ENCODE measurements at regions of chr7 and their contacts with region 1.

Region 1: GRCh38 chr7:104848138-104848990 is 165.6 kb upstream of the KMT2E start:
- DNase-seq: peak; percentile 18
- ATAC-seq: peak; percentile 90
- H3K4me3 ChIP-seq: no peak overlapping the region
- H3K27ac ChIP-seq: no peak overlapping the region
- H3K4me1 ChIP-seq: no peaks in the 10 kb centered on the region
- H3K27me3 ChIP-seq: peaks cover 50% of the 10 kb centered on the region
- CTCF ChIP-seq: peak; percentile 62 to 94 (median 88)
- POLR2A ChIP-seq: no peak
- RAD21 ChIP-seq: peak; percentile 84

Region 2: DNA sequence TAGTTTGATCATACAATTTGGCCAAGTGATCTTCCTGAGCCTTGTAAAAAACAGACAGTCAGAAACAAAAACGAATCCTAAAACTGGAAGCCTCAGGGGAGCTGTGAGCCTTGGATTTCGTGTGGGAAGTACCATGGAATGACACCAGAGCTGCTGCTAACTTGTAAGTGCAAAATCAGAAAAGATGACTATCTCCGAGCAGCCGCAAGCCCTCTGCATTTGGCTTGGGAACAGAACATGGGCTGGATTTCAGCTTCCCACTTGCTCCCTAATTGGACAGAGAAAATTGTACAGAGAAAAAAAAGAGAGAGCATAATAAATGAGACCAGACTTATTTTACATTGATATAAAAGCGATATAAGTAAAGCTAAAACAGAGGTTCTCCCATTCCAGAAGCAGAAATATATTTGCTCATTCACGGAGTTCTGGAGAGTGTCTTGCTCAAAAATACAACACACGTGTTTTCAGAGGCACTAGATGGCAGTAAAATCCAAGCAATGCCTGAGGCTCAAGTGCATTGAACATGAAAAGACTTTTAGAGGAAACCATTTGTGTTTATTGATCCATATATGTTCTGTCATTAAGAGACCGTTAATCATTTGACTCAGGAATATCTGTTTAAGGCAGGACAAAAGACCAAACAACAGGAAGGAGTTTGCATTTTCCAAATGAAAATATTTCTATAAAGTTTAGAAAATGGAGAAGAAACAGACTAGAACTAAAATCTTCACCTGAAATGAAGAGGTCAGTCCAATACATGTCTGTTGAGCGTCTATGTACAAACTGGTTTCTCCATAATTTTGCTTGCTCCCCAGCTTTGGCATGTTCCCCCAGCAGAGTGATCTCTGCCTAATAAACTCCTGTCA is 1324.1 kb before region 1 on chr7:
- CTCF ChIA-PET with region 1: no interaction called
- POLR2A ChIA-PET with region 1: no interaction called
- RAD21 ChIA-PET with region 1: no interaction called
- intact Hi-C with region 1: loop called (anchors 10 kb)
- DNase-seq: peak; percentile 12
- ATAC-seq: peak; percentile 62
- H3K4me3 ChIP-seq: no peak overlapping the region
- H3K27ac ChIP-seq: no peak overlapping the region
- H3K4me1 ChIP-seq: no peaks in the 10 kb centered on the region
- H3K27me3 ChIP-seq: peaks cover 57% of the 10 kb centered on the region
- CTCF ChIP-seq: peak; percentile 19 to 44 (median 25); a peak in 3 of 6 replicates
- POLR2A ChIP-seq: no peak
- RAD21 ChIP-seq: peak; percentile 64

Region 3: DNA sequence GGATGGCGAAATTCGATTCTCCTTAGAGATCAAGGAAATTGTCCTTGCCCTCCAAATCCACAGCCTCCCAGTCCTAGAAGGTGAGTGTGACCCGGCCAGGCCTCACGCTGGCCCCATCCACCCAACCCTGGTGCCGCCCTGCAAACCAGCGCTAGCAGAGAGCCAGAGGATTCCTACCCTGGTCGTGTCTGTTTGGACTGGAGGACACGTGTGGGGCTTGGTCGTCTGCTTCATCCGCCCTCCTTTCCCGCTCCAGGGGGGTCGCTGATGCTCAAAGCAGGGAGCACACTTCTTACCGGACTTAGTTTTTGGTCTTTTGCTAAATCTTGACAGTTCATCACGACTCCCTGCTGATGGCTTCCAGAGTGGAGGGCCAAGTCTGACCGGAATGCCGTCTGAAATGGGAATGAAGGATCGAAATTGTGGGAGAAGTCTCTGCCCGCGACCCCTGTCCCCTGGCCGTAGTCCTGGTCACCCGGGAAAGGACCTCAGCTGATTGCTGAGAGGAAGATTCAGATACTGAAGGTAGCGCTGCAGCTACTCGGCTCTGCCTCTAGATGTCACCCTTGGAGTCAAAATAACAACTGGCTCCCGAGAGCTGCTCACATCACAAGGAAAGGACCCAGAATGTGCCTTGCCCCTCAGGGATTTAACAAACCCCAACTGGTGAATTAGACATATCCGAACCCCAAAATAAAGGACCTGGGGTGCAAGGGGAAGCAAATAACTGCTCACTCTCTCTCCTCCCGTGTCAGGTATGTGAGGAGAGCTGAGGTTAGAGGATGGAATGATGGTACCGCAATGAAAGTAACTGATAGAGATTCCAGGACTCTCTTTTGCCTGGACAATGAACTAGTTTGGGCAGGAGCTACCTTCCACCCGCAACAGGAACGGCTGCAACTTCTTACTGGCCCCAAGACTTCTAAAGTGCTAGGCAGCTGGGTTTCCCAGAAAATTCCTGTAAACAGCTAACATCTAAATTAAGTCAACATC is 617.0 kb before region 1 on chr7:
- CTCF ChIA-PET with region 1: interaction called, 7 read pairs
- POLR2A ChIA-PET with region 1: no interaction called
- RAD21 ChIA-PET with region 1: no interaction called
- intact Hi-C with region 1: loop called (anchors 2 kb)
- DNase-seq: peak; percentile 36
- ATAC-seq: peak; percentile 98
- H3K4me3 ChIP-seq: no peak overlapping the region
- H3K27ac ChIP-seq: no peak overlapping the region
- H3K4me1 ChIP-seq: no peaks in the 10 kb centered on the region
- H3K27me3 ChIP-seq: peaks cover 12% of the 10 kb centered on the region; the same call in 1 of the 2 replicates
- CTCF ChIP-seq: peak; percentile 54 to 87 (median 85)
- POLR2A ChIP-seq: no peak
- RAD21 ChIP-seq: peak; percentile 79

Region 4: DNA sequence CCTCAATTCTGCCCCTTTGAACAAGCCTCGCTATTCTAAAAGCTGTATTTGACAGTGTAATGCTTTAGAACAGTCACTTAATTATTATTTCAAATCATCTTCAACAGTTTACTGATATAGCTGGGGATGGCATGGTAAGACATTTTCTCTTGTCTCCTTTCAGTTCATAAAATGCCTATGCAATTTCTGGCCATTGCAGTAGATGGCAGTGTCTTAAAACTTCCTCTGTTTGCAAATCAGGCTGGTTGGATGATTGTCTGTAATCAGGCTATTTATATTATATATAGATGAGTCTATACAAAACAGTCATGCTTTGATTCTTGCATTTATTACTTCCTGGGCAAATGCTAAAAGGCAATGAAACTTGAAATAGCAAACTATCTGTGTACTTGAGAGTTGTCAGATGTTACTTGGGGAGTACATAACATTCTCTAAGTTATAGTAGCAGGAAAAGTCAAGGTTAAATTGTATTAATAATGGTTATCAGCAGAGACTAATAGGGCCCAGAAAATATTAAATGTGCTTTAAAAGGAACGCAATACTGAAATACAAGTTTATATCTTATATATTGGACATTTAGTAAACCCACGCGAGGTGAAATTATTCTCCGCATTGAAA is 575.5 kb before region 1 on chr7:
- CTCF ChIA-PET with region 1: no interaction called
- POLR2A ChIA-PET with region 1: no interaction called
- RAD21 ChIA-PET with region 1: no interaction called
- intact Hi-C with region 1: loop called (anchors 5 kb)
- DNase-seq: peak; percentile 26
- ATAC-seq: peak; percentile 61; the same call in 1 of the 2 replicates
- H3K4me3 ChIP-seq: no peak overlapping the region
- H3K27ac ChIP-seq: no peak overlapping the region
- H3K4me1 ChIP-seq: no peaks in the 10 kb centered on the region
- H3K27me3 ChIP-seq: peaks cover 13% of the 10 kb centered on the region
- CTCF ChIP-seq: peak; percentile 45 to 67 (median 61); a peak in 5 of 6 replicates
- POLR2A ChIP-seq: no peak
- RAD21 ChIP-seq: peak; percentile 59

Region 5: GRCh38 chr7:104643587-104644217 is 204.7 kb before region 1 on chr7:
- CTCF ChIA-PET with region 1: interaction called, 20 read pairs
- POLR2A ChIA-PET with region 1: no interaction called
- RAD21 ChIA-PET with region 1: interaction called in 1 of 2 experiments, 5 read pairs
- intact Hi-C with region 1: loop called (anchors 1 kb)
- DNase-seq: peak; percentile 15
- ATAC-seq: peak; percentile 67
- H3K4me3 ChIP-seq: no peak overlapping the region
- H3K27ac ChIP-seq: no peak overlapping the region
- H3K4me1 ChIP-seq: no peaks in the 10 kb centered on the region
- H3K27me3 ChIP-seq: peaks cover 53% of the 10 kb centered on the region
- CTCF ChIP-seq: peak; percentile 49 to 77 (median 77); a peak in 5 of 6 replicates
- POLR2A ChIP-seq: no peak
- RAD21 ChIP-seq: peak; percentile 54

Measured in HCT116 (cell line).